ENCODE measurements at regions of chrX and their contacts with region 1.

Region 1: GRCh38 chrX:136115126-136115903 is 32.0 kb upstream of the FHL1 start:
- DNase-seq: no peak
- ATAC-seq: no peak
- H3K4me3 ChIP-seq: no peak overlapping the region
- H3K27ac ChIP-seq: peak overlapping the region in 1 of 2 donors; percentile 96
- H3K4me1 ChIP-seq: peaks cover 0 to 4% of the 10 kb centered on the region in 2 donors
- H3K27me3 ChIP-seq: no peaks in the 10 kb centered on the region

Region 2: GRCh38 chrX:136065044-136065671 is 50.2 kb before region 1 on chrX:
- intact Hi-C with region 1: loop called in 1 of 2 experiments (anchors 5 kb)
- DNase-seq: peak in 1 of 2 donors; percentile 60
- ATAC-seq: peak; percentile 35
- H3K4me3 ChIP-seq: no peak overlapping the region
- H3K27ac ChIP-seq: peak overlapping the region in 1 of 2 donors; percentile 42
- H3K4me1 ChIP-seq: no peaks in the 10 kb centered on the region
- H3K27me3 ChIP-seq: no peaks in the 10 kb centered on the region

Region 3: DNA sequence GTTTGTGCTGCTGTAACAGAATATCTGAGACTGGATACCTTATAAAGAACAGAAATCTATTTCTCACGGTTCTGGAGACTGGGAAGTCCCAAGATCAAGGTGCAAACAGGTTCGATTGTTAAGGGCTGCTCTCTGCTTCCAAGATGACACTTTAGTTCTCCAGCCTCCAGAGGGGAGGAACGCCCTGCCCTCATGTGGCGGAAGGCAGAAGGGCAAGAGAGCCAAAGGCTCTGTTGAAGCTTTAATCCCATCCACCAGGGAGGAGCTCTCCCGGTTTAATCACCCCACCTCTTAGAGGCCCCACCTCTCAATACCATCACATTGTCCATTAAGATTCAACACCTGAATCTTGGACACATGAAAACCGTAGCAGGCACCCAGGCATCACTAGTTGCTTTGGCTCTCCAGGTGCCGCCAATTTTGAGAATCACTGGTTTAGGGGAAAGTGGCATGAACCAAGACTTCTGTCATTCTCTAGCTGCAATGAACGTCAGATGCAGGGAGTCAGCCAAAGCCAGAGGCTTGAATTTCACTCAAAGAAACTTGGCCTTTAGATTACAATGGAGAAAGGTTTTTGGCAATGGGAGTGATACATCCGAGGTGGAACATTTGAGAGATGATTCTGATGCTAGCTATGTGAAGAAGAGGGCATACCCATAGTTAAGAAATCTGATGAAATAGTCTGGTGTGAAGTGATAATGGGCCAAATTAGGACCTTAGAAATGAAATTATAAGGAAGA is 47.7 kb after region 1 on chrX:
- intact Hi-C with region 1: loop called in 1 of 2 experiments (anchors 5 kb)
- DNase-seq: peak; percentile 65 to 82
- ATAC-seq: peak; percentile 64
- H3K4me3 ChIP-seq: no peak overlapping the region
- H3K27ac ChIP-seq: peak overlapping the region; percentile 61 to 79
- H3K4me1 ChIP-seq: peaks cover 3 to 4% of the 10 kb centered on the region in 2 donors
- H3K27me3 ChIP-seq: no peaks in the 10 kb centered on the region

Region 4: GRCh38 chrX:136325377-136325776 is 210.1 kb after region 1 on chrX:
- intact Hi-C with region 1: no loop called
- DNase-seq: no peak
- ATAC-seq: no peak
- H3K4me3 ChIP-seq: no peak overlapping the region
- H3K27ac ChIP-seq: no peak overlapping the region
- H3K4me1 ChIP-seq: no peaks in the 10 kb centered on the region
- H3K27me3 ChIP-seq: no peaks in the 10 kb centered on the region